Mammary epithelial cell (primary cell): ENCODE measurements at regions of chr10 and their contacts with region 1.

Region 1: GRCh38 chr10:75401569-75402485 is at the start of gene ZNF503:
- DNase-seq: peak; percentile 97
- H3K4me3 ChIP-seq: peak within 1 kb of the TSS; percentile 84 to 98 (median 97)
- H3K27ac ChIP-seq: peak within 1 kb of the TSS; percentile 56
- H3K4me1 ChIP-seq: peaks cover 41% of the 10 kb centered on the region
- H3K27me3 ChIP-seq: no peaks in the 10 kb centered on the region
- CTCF ChIP-seq: peak in 1 of 2 donors; percentile 35
- total RNA-seq, gene ZNF503: 14.1 to 33.7 TPM

Region 2: GRCh38 chr10:75250910-75251309 is 150.9 kb before region 1 on chr10:
- CTCF ChIA-PET with region 1: no interaction called
- dilution Hi-C with region 1: no loop called
- in situ Hi-C with region 1: no loop called
- intact Hi-C with region 1: loop called (anchors 5 kb)
- DNase-seq: peak; percentile 87
- H3K4me3 ChIP-seq: no peak overlapping the region
- H3K27ac ChIP-seq: peak overlapping the region; percentile 5
- H3K4me1 ChIP-seq: peaks cover 12% of the 10 kb centered on the region
- H3K27me3 ChIP-seq: no peaks in the 10 kb centered on the region
- CTCF ChIP-seq: no peak

Region 3: GRCh38 chr10:75469006-75469616 is 67.3 kb after region 1 on chr10:
- CTCF ChIA-PET with region 1: no interaction called
- dilution Hi-C with region 1: no loop called
- in situ Hi-C with region 1: no loop called
- intact Hi-C with region 1: loop called (anchors 2 kb)
- DNase-seq: peak; percentile 94
- H3K4me3 ChIP-seq: no peak overlapping the region
- H3K27ac ChIP-seq: peak overlapping the region; percentile 4
- H3K4me1 ChIP-seq: peaks cover 25% of the 10 kb centered on the region
- H3K27me3 ChIP-seq: no peaks in the 10 kb centered on the region
- CTCF ChIP-seq: no peak

Region 4: DNA sequence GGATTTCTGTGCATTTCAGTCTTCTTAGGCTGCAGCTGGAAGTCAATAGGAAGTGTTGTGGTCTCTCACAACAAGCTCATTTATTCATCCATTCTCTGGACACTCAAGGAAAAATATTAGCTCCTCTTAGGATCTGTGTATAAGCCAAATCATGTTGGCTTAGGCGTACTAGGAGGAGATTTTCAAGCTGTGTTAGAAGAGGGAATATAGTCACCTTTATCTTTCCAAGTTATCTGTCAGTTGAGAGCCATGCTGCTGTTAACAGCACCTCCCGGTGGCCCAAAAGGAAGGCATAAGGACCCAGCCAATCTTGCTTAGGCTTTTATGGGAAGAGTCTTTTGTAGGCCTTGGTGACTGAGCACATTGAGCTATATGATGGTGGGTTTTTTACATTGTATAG is 249.6 kb after region 1 on chr10:
- CTCF ChIA-PET with region 1: interaction called, 4 read pairs
- dilution Hi-C with region 1: no loop called
- in situ Hi-C with region 1: loop called in 1 of 2 experiments (anchors 25 kb)
- intact Hi-C with region 1: loop called (anchors 1 kb)
- DNase-seq: peak; percentile 35
- H3K4me3 ChIP-seq: no peak overlapping the region
- H3K27ac ChIP-seq: no peak overlapping the region
- H3K4me1 ChIP-seq: no peaks in the 10 kb centered on the region
- H3K27me3 ChIP-seq: no peaks in the 10 kb centered on the region
- CTCF ChIP-seq: peak; percentile 47 to 74

Region 5: GRCh38 chr10:75910032-75910431 is 508.2 kb after region 1 on chr10:
- CTCF ChIA-PET with region 1: no interaction called
- dilution Hi-C with region 1: no loop called
- in situ Hi-C with region 1: loop called (anchors 25 kb)
- intact Hi-C with region 1: loop called (anchors 1 kb)
- DNase-seq: no peak
- H3K4me3 ChIP-seq: no peak overlapping the region
- H3K27ac ChIP-seq: no peak overlapping the region
- H3K4me1 ChIP-seq: peaks cover 4% of the 10 kb centered on the region
- H3K27me3 ChIP-seq: peaks cover 2% of the 10 kb centered on the region
- CTCF ChIP-seq: peak; percentile 22 to 47

Region 6: DNA sequence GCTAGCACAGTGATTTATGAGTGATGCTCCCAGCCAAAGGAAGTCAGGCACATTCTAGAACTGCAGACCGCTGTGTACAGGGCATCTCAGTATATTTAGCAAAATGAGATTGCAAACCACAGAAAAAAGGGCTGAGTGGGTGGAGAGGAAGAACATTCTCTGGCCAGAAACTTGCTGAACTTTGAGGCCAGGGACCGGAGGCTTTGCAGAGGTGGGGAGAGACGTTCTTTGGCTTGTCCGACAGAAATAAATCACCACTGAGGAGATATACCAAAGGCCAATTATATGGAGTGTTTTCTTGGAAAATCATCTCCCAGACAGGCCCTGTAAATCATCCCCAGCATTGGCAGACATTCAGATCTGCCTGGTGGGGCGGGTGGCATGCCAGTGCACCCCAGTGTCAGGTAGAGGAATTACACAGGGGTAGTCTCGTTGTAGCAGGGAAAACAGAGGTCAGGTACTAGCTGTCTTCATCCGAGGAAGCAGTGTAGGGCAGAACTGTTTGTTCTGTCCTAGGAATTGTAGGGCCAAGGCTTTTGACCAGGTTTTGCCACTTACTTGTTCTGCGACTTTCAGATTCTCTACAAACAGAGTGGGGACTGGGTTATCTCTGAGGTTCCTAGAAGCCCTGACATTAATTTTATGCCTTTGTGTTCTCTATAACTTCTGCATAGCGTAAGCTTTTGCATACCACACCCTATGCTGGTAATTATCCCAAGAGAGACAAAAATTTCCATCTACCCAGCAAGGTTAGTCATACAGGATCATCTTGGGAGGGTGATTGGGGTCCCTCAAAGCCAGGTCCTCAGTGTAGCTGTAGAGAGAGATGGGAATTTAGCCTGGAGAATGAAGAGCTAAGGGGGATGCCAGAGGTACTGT is 685.2 kb after region 1 on chr10:
- CTCF ChIA-PET with region 1: no interaction called
- dilution Hi-C with region 1: no loop called
- in situ Hi-C with region 1: no loop called
- intact Hi-C with region 1: loop called (anchors 1 kb)
- DNase-seq: peak; percentile 56
- H3K4me3 ChIP-seq: no peak overlapping the region
- H3K27ac ChIP-seq: no peak overlapping the region
- H3K4me1 ChIP-seq: peaks cover 12% of the 10 kb centered on the region
- H3K27me3 ChIP-seq: no peaks in the 10 kb centered on the region
- CTCF ChIP-seq: peak; percentile 77 to 84

Region 7: GRCh38 chr10:76984559-76985443 is 1583.0 kb after region 1 on chr10:
- CTCF ChIA-PET with region 1: no interaction called
- dilution Hi-C with region 1: no loop called
- in situ Hi-C with region 1: no loop called
- intact Hi-C with region 1: loop called (anchors 10 kb)
- DNase-seq: peak; percentile 45
- H3K4me3 ChIP-seq: no peak overlapping the region
- H3K27ac ChIP-seq: no peak overlapping the region
- H3K4me1 ChIP-seq: no peaks in the 10 kb centered on the region
- H3K27me3 ChIP-seq: no peaks in the 10 kb centered on the region
- CTCF ChIP-seq: peak; percentile 90 to 91